ENCODE measurements at regions of chr12 and their contacts with region 1.

Region 1: GRCh38 chr12:75480469-75480949 is at the start of gene GLIPR1:
- DNase-seq: peak; percentile 81
- H3K4me3 Mint-ChIP-seq: peak within 1 kb of the TSS; percentile 87
- H3K27ac Mint-ChIP-seq: peak within 1 kb of the TSS; percentile 98
- H3K4me1 Mint-ChIP-seq: peaks cover 71% of the 10 kb centered on the region
- H3K27me3 Mint-ChIP-seq: peaks cover 2% of the 10 kb centered on the region
- total RNA-seq, gene GLIPR1: 52.3 to 54.7 TPM

Region 2: GRCh38 chr12:75390899-75391538 is 89.5 kb before region 1 on chr12 and contains the start of gene GLIPR1L2:
- CTCF ChIA-PET with region 1: interaction called, 31 read pairs
- POLR2A ChIA-PET with region 1: interaction called, 26 read pairs
- DNase-seq: peak; percentile 92
- H3K4me3 Mint-ChIP-seq: peak within 1 kb of the TSS; percentile 75
- H3K27ac Mint-ChIP-seq: peak within 1 kb of the TSS; percentile 83
- H3K4me1 Mint-ChIP-seq: peaks cover 39% of the 10 kb centered on the region
- H3K27me3 Mint-ChIP-seq: no peaks in the 10 kb centered on the region
- total RNA-seq, gene GLIPR1L2: 0.35 TPM in 1 of 2 experiments, not detected in the other

Region 3: DNA sequence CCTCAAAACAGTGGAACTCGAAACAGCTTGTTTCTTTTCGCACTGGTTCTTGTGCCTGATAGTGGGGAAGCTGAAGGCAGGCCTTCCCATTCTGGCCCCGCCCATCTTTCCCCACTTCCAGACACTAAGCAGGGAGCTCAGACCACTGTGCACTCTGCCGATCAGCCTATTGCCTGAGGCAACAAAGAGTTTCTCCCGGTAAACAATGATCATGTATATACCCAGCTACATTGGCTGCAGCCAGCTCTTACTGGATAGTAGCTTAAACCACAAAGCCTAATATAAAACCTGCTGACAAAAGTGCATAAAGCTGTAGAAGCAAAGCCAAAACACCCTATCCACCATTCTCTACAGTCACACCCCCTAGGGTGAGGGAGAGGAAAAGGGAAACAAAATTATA is 24.7 kb before region 1 on chr12:
- CTCF ChIA-PET with region 1: interaction called, 17 read pairs
- POLR2A ChIA-PET with region 1: interaction called, 6 read pairs
- DNase-seq: no peak
- H3K4me3 Mint-ChIP-seq: no peak overlapping the region
- H3K27ac Mint-ChIP-seq: no peak overlapping the region
- H3K4me1 Mint-ChIP-seq: peaks cover 37% of the 10 kb centered on the region
- H3K27me3 Mint-ChIP-seq: no peaks in the 10 kb centered on the region

Region 4: GRCh38 chr12:75511116-75512048 is 30.9 kb after region 1 on chr12 and contains the start of gene KRR1:
- CTCF ChIA-PET with region 1: interaction called, 21 read pairs
- POLR2A ChIA-PET with region 1: interaction called, 25 read pairs
- DNase-seq: peak; percentile 94
- H3K4me3 Mint-ChIP-seq: peak within 1 kb of the TSS; percentile 96
- H3K27ac Mint-ChIP-seq: peak within 1 kb of the TSS; percentile 98
- H3K4me1 Mint-ChIP-seq: peaks cover 33% of the 10 kb centered on the region
- H3K27me3 Mint-ChIP-seq: no peaks in the 10 kb centered on the region
- total RNA-seq, gene KRR1: 61.8 to 67.2 TPM

Measured in activated CD4-positive, alpha-beta memory T cell treated with anti-CD3 and anti-CD28 coated beads, Interleukin-2, amount 10 ng/mL, durations not matched to agents 7 days and 5 days (primary cell).